AG04450 (cell line): ENCODE measurements at regions of chr1 and their contacts with region 1.

Region 1: DNA sequence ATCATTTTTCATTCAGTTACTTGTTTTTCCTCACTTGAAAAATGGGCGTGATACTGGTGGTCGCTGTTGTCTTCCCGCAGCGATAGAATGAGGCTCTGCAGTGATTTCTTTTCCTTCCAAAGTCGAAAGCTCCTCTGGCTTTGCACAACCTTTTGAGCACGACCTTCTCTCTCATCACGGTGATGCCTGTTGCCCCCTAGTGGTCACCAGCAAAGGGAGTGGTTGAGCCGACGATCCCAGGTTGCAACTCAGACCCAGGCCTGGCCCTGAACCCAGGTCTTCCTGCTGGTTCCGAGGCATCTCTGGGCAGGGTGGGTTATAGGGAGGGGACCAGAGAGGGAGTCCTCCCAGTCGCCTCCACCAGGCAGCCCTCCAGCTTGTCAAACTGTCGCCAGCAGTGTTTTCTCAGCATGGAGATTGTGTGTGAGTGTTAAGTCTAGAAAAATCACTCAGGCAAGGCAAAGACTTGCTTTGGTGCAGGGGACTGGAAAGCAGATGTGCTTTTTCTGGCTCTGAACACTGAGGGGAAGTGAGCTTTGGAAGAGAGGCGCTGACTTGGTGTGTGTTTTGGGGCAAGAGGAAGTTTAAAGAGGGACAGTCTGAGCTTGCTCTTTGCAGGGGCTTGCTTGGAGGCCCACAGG is 285.3 kb downstream of the CAMTA1 start:
- DNase-seq: peak; percentile 27
- H3K4me3 ChIP-seq: peak overlapping the region; percentile 48
- H3K27ac ChIP-seq: no peak overlapping the region
- H3K27me3 ChIP-seq: no peaks in the 10 kb centered on the region
- CTCF ChIP-seq: peak; percentile 87

Region 2: DNA sequence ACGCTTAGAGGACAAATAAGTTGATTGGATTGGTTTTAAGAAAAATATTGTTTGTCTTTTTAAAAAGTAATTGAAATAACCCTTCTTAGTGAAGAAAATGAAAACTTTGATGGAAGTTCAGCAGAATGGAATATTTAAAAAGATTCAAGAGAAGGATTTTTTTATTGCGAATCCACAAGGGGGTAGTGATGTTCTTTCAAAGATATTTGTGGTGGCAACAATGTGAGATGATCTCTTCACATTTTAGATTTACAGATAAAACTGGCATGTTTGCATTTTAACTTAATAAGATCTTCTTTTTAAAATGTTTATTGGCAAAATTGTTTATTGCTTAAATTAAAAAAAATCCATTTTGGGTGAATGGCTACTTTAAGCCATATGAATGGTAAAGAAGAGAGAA is 276.3 kb before region 1 on chr1:
- CTCF ChIA-PET with region 1: interaction called, 39 read pairs
- POLR2A ChIA-PET with region 1: no interaction called
- DNase-seq: peak; percentile 29
- H3K4me3 ChIP-seq: no peak overlapping the region
- H3K27ac ChIP-seq: no peak overlapping the region
- H3K27me3 ChIP-seq: no peaks in the 10 kb centered on the region
- CTCF ChIP-seq: peak; percentile 49

Region 3: GRCh38 chr1:7042322-7043190 is 28.0 kb before region 1 on chr1:
- CTCF ChIA-PET with region 1: interaction called, 26 read pairs
- POLR2A ChIA-PET with region 1: no interaction called
- DNase-seq: no peak
- H3K4me3 ChIP-seq: no peak overlapping the region
- H3K27ac ChIP-seq: no peak overlapping the region
- H3K27me3 ChIP-seq: peaks cover 4% of the 10 kb centered on the region
- CTCF ChIP-seq: peak; percentile 62

Region 4: DNA sequence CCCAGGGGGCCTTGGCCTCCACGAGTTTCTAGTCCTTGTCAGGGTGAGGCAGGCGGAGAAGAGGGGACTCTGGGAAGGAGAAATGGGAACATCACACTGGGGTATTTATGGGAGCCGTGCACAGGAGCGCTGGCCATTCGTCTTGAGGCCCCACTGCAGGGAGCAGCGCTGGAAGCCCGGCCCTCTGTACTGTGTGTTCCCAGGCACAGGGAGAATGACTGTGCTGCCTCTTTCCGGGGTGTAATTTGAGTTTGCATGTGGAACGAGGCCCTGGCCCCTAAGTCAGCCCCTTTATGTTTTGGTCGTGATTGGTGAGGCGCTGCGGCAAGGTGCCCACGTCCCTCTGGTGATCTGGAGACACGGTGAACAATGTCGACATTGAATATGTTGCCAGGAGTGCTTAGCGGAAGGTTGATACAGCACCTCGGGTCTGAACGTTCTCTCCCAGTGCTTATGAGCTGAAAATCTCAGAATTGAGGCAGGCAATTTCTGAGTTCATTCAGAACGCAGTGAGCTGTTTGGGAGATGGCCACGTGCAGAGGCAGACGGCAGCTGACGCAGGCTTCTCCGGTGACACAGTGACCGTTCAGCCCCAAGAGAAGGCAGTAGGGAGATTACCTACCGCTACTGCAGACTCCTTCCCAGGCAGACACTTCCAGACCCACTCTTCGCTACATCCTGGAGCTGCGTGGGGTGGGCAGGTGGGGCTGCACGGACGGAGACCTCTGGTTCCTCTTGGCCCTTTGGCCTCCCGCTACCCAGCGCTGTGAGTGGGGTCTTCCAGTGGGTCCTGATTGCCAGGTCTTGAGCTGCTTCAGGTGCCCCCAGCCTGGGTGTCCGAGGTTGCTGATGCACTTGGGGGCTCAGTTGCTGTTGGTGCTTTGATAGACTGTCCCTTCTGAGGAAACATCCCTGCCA is 19.5 kb before region 1 on chr1:
- CTCF ChIA-PET with region 1: interaction called, 12 read pairs
- POLR2A ChIA-PET with region 1: no interaction called
- DNase-seq: no peak
- H3K4me3 ChIP-seq: no peak overlapping the region
- H3K27ac ChIP-seq: no peak overlapping the region
- H3K27me3 ChIP-seq: peaks cover 14% of the 10 kb centered on the region
- CTCF ChIP-seq: no peak

Region 5: DNA sequence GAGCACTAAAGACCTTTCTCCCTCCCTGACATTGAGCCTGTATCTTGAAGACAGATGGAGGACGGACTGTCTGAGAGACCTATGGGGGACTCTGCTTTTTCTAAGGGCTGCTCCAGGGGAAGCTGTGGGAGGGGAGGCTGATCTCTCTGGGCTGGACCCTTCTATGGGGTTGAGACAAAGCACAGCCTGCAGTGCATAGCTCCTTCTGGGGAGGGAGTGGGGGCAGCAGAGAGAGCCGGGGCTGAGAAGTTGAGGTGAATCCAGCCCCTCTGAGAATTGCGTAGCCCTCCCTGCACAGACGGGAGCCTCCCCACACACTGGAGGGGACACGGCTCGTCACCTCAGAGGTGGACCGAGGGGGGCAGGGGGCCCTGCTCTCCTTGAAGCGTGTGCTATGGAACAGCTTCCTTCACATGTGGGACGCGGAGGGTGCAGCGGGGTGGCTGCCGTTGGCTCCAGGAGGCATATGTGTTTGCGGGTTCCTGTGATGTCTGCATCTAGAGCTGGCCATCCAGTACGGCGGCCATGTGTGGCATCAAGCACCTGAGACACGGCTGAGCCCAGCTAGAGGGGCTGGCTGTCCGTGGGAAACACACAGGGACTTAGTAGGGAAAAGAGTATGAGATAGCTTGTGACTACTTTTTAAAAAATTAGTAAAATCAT is 13.9 kb after region 1 on chr1:
- CTCF ChIA-PET with region 1: interaction called, 37 read pairs
- POLR2A ChIA-PET with region 1: no interaction called
- DNase-seq: no peak
- H3K4me3 ChIP-seq: no peak overlapping the region
- H3K27ac ChIP-seq: no peak overlapping the region
- H3K27me3 ChIP-seq: peaks cover 10% of the 10 kb centered on the region
- CTCF ChIP-seq: no peak

Region 6: GRCh38 chr1:7646981-7647901 is 576.7 kb after region 1 on chr1:
- CTCF ChIA-PET with region 1: interaction called, 29 read pairs
- POLR2A ChIA-PET with region 1: no interaction called
- DNase-seq: no peak
- H3K4me3 ChIP-seq: no peak overlapping the region
- H3K27ac ChIP-seq: no peak overlapping the region
- H3K27me3 ChIP-seq: peaks cover 2% of the 10 kb centered on the region
- CTCF ChIP-seq: peak; percentile 93